ENCODE measurements at regions of chr19 and their contacts with region 1.

Region 1: GRCh38 chr19:44212250-44212865 is at the start of gene ZNF227:
- DNase-seq: peak; percentile 93
- H3K4me3 Mint-ChIP-seq: peak within 1 kb of the TSS; percentile 94
- H3K27ac Mint-ChIP-seq: peak within 1 kb of the TSS; percentile 91
- H3K4me1 Mint-ChIP-seq: peaks cover 12% of the 10 kb centered on the region
- H3K27me3 Mint-ChIP-seq: no peaks in the 10 kb centered on the region
- total RNA-seq, gene ZNF227: 17.8 and 18.8 TPM in 2 replicates

Region 2: DNA sequence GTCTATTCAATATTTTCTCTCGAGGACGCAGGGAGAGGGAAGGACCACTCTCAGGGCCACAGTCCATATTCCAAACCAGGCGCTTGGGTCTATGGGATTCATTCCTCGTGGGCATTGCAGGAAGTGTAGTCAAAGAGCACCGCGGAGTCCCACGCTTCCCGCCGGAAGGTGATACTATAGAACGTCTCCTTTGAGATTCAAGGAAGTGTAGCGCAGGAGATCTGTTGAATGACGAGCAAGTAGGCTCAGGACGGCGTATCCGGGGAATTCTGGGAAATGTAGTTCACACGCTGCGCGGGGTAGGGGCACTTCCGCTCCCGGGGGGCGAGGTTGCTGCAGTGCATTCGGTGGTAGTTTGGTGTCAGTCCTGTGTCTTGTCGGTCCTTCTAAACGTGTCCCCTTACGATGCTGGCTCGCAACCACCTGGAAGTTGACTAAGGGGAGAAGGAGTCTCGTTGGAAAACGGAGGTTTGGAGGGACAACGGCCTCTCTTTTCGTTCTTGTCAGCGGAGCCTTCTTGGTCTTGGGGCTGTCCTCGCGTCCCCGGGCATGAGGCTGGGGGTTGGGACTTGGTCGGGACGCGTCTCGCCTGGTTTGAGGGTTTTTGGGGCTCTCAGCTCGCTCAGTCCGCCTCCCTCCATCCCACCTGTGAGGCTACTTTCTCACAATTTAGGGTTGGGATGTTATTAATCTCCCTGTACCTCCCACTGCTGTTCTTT is 140.4 kb before region 1 on chr19 and contains the start of gene ZNF284:
- intact Hi-C with region 1: loop called (anchors 1 kb)
- DNase-seq: peak; percentile 94
- H3K4me3 Mint-ChIP-seq: peak within 1 kb of the TSS; percentile 91
- H3K27ac Mint-ChIP-seq: peak within 1 kb of the TSS; percentile 73
- H3K4me1 Mint-ChIP-seq: peaks cover 13% of the 10 kb centered on the region
- H3K27me3 Mint-ChIP-seq: no peaks in the 10 kb centered on the region
- total RNA-seq, gene ZNF284: 1.2 TPM in 2 replicates

Region 3: DNA sequence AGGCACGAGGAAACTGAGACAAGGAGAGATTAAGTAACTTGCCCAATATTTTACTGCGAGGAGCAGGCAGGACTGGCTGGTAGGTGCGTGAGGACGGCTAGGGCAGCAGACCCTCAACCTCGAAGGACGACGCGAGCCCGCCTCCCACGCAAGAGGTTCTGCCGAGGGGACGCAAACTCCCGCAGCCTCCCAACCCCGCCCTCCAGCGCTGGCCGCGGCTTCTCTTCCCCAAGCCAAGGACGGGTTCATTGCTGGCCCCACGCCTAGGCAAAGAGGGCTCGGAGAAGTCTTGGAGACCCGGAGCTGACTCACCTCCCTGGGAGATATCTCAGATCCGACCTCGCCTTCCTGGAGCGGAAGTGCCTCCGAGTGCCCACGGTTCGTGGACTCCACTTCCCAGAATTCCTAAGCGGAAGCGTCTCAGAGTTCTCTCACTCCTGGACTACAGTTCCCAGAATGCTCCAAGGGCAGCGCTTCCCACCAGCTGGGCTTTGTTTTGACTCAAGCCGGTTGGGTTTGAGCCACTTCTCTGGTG is 92.4 kb after region 1 on chr19 and contains the start of gene ZNF235:
- intact Hi-C with region 1: loop called (anchors 2 kb)
- DNase-seq: peak; percentile 90
- H3K4me3 Mint-ChIP-seq: peak within 1 kb of the TSS; percentile 90
- H3K27ac Mint-ChIP-seq: peak within 1 kb of the TSS; percentile 83
- H3K4me1 Mint-ChIP-seq: peaks cover 11% of the 10 kb centered on the region
- H3K27me3 Mint-ChIP-seq: no peaks in the 10 kb centered on the region
- total RNA-seq, gene ZNF235: 2.8 and 3.1 TPM in 2 replicates

Region 4: GRCh38 chr19:44500148-44500956 is 288.0 kb after region 1 on chr19 and contains the start of gene ZNF180:
- intact Hi-C with region 1: loop called (anchors 5 kb)
- DNase-seq: peak; percentile 99
- H3K4me3 Mint-ChIP-seq: peak within 1 kb of the TSS; percentile 94
- H3K27ac Mint-ChIP-seq: peak within 1 kb of the TSS; percentile 93
- H3K4me1 Mint-ChIP-seq: peaks cover 27% of the 10 kb centered on the region
- H3K27me3 Mint-ChIP-seq: no peaks in the 10 kb centered on the region
- total RNA-seq, gene ZNF180: 7.0 and 8.5 TPM in 2 replicates